CD4-positive, alpha-beta memory T cell (primary cell): ENCODE measurements at regions of chr1 and their contacts with region 1.

Region 1: DNA sequence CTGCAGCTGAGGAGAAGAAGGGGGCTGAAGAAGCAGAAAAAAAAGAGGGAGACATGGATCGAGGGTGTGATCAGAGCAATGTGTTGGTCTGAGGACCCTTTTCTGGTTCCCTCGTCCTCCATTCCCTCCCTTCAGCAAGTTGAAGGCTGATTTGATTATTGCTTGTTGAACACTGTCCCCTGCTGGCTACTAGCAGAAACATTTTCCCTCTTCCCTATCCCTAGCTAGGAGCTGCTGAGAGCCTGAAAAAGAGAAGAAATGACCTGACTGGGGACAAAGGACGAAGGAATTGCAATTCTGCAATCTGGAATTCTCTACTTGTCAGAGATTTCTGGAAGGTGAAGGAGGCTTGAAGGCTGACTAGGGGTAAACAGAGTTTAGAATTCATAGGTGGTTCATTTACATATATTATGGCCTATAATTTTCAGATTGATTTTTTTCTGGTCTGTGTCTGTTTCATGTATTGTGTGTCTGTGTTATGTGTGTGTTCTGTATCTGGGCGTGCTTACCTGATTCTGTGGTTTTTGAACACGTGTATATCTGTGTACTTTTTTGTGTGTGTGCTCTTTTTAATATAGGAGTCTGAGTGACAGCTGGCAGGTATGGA is 9.8 kb downstream of the NHLH1 start:
- DNase-seq: peak in 4 of 5 donors; percentile 39 to 46 (median 44)
- H3K4me3 ChIP-seq: no peak overlapping the region
- H3K4me3 Mint-ChIP-seq: peak overlapping the region in 3 of 8 donors; percentile 17 to 62 (median 48)
- H3K27ac ChIP-seq: no peak overlapping the region
- H3K27ac Mint-ChIP-seq: peak overlapping the region in 1 of 7 donors; percentile 31
- H3K4me1 ChIP-seq: peaks cover 14% of the 10 kb centered on the region
- H3K4me1 Mint-ChIP-seq: peaks cover 9 to 16% (median 12%) of the 10 kb centered on the region in 4 donors
- H3K27me3 ChIP-seq: no peaks in the 10 kb centered on the region
- H3K27me3 Mint-ChIP-seq: peaks cover 0 to 1% of the 10 kb centered on the region in 2 donors

Region 2: DNA sequence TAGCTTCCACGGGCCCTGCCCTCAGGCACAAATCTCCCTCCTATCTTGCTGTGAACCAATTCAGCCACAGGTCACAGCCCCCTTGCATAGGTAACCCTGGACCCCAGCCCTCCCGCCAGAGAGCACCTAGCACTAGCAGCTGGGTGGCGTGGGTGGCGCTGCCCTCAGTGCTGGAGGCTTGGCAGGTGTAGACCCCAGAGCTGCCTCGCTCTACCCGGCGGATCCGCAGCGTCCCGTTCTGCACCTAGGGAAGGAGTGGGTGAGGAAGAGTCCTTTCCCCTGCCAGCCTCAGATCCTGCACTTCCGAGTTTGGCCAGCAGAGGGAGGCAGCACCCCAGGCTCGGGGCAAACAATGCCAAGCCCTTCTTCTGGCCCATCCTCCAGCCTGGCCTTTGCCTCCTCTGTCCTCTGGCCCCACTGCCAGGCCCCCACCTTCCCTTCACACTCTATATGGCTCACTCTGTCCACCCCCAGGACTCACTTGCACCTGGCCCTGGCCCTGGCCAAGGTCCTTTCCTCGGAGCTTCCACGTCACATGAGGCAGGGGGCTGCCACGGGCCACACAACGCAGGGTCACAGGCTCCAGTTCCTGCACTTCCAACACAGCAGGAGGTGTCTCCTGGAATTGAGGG is 440.2 kb before region 1 on chr1:
- CTCF ChIA-PET with region 1: no interaction called
- POLR2A ChIA-PET with region 1: no interaction called
- intact Hi-C with region 1: loop called (anchors 5 kb)
- DNase-seq: peak; percentile 69 to 81 (median 73)
- H3K4me3 ChIP-seq: no peak overlapping the region
- H3K4me3 Mint-ChIP-seq: peak overlapping the region in 1 of 8 donors; percentile 26
- H3K27ac ChIP-seq: no peak overlapping the region
- H3K27ac Mint-ChIP-seq: peak overlapping the region in 3 of 7 donors; percentile 40 to 68 (median 45)
- H3K4me1 ChIP-seq: peaks cover 15% of the 10 kb centered on the region
- H3K4me1 Mint-ChIP-seq: peaks cover 0 to 7% (median 3%) of the 10 kb centered on the region in 4 donors
- H3K27me3 ChIP-seq: no peaks in the 10 kb centered on the region
- H3K27me3 Mint-ChIP-seq: peaks cover 6 to 10% of the 10 kb centered on the region in 2 donors

Region 3: DNA sequence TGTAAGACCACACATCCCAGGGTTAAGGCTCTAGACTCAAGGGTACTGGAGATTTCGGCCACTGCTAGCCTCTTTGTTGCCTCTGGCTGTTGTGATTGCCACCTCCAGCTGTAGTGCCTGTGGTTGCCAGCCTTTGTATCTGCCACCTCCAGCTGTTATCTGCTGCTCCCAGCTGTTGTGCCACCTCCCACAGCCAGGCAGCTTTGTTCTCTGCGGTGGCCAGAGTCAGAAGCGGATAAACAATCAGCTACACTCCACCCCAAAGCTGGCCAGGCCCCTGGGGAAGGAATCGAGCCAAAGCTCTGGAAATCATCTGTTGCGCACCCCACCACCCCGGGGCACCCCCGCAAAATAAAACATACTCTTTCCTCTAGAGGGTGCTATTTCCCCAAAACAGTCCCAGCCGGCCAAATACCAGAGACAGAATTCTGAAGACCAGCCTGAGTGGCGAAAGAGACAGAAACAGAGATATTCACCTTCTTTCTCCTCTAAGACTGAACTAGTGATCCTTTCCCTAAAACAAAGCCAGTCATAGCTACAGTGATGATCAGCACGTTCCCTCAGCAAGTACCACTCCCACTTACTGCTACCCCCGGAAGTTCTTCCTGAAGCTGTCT is 330.0 kb before region 1 on chr1:
- CTCF ChIA-PET with region 1: interaction called, 4 read pairs
- POLR2A ChIA-PET with region 1: no interaction called
- intact Hi-C with region 1: loop called (anchors 5 kb)
- DNase-seq: peak; percentile 27 to 48 (median 47)
- H3K4me3 ChIP-seq: no peak overlapping the region
- H3K4me3 Mint-ChIP-seq: peak overlapping the region; percentile 57 to 79 (median 70)
- H3K27ac ChIP-seq: no peak overlapping the region
- H3K27ac Mint-ChIP-seq: peak overlapping the region in 3 of 7 donors; percentile 31 to 62 (median 62)
- H3K4me1 ChIP-seq: peaks cover 10% of the 10 kb centered on the region
- H3K4me1 Mint-ChIP-seq: peaks cover 6 to 12% (median 9%) of the 10 kb centered on the region in 4 donors
- H3K27me3 ChIP-seq: no peaks in the 10 kb centered on the region
- H3K27me3 Mint-ChIP-seq: peaks cover 12 to 18% of the 10 kb centered on the region in 2 donors

Region 4: DNA sequence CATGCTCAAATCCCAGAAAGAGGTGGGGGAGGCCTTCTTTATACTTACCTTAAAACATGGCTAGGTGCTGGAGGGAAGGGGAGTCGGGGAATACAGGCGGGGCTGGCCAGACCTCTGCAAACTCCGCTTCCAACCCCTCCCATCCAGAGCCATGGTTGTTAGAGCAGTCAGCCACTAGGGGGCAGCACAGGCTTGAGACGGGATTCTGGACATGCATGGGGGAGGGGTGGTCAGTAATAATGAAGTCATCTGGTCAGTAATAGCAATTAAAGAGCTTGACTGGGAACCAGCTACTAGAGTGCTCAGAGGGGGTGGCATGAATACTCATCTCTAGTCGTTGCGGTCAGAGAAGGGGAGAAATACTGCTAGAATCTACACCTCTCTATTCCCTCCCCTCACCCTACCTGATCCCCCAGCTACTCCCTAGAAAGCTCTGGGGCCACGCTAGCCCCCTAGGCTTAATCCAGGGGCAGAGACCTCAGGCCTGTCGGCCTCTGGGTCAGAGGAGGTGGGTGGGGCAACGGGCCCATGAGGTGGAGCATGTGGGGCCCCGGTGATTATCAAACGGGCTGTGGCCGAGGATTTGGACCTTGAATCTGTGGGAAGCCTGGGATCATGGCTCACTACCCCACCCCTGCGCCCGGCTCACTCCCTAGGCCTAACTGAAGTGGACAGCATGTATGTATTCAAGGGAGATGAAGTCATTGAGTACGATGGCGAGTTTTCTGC is 183.4 kb before region 1 on chr1:
- CTCF ChIA-PET with region 1: interaction called, 20 read pairs
- POLR2A ChIA-PET with region 1: interaction called, 3 read pairs
- intact Hi-C with region 1: loop called (anchors 1 kb)
- DNase-seq: peak; percentile 67 to 75 (median 68)
- H3K4me3 ChIP-seq: no peak overlapping the region
- H3K4me3 Mint-ChIP-seq: no peak overlapping the region
- H3K27ac ChIP-seq: no peak overlapping the region
- H3K27ac Mint-ChIP-seq: no peak overlapping the region
- H3K4me1 ChIP-seq: peaks cover 9% of the 10 kb centered on the region
- H3K4me1 Mint-ChIP-seq: no peaks in the 10 kb centered on the region
- H3K27me3 ChIP-seq: no peaks in the 10 kb centered on the region
- H3K27me3 Mint-ChIP-seq: peaks cover 1 to 3% of the 10 kb centered on the region in 2 donors

Region 5: GRCh38 chr1:160342953-160343869 is 33.4 kb before region 1 on chr1 and contains the starts of genes COPA and NCSTN:
- CTCF ChIA-PET with region 1: interaction called, 19 read pairs
- POLR2A ChIA-PET with region 1: no interaction called
- intact Hi-C with region 1: no loop called
- DNase-seq: peak; percentile 89 to 95 (median 89)
- H3K4me3 ChIP-seq: peak within 1 kb of the TSS; percentile 77 to 96
- H3K4me3 Mint-ChIP-seq: peak within 1 kb of the TSS; percentile 99 to 100 (median 100)
- H3K27ac ChIP-seq: peak within 1 kb of the TSS; percentile 94
- H3K27ac Mint-ChIP-seq: peak within 1 kb of the TSS; percentile 96 to 100 (median 100)
- H3K4me1 ChIP-seq: peaks cover 44% of the 10 kb centered on the region
- H3K4me1 Mint-ChIP-seq: peaks cover 35 to 67% (median 49%) of the 10 kb centered on the region in 4 donors
- H3K27me3 ChIP-seq: no peaks in the 10 kb centered on the region
- H3K27me3 Mint-ChIP-seq: no peaks in the 10 kb centered on the region
- total RNA-seq, gene COPA: 128 to 132 TPM
- total RNA-seq, gene NCSTN: 62.2 to 68.0 TPM

Region 6: GRCh38 chr1:160354388-160354985 is 22.1 kb before region 1 on chr1:
- CTCF ChIA-PET with region 1: interaction called, 77 read pairs
- POLR2A ChIA-PET with region 1: no interaction called
- intact Hi-C with region 1: no loop called
- DNase-seq: peak in 2 of 5 donors; percentile 20 to 39
- H3K4me3 ChIP-seq: no peak overlapping the region
- H3K4me3 Mint-ChIP-seq: no peak overlapping the region
- H3K27ac ChIP-seq: no peak overlapping the region
- H3K27ac Mint-ChIP-seq: no peak overlapping the region
- H3K4me1 ChIP-seq: no peaks in the 10 kb centered on the region
- H3K4me1 Mint-ChIP-seq: peaks cover 0 to 3% (median under 1%) of the 10 kb centered on the region in 4 donors
- H3K27me3 ChIP-seq: no peaks in the 10 kb centered on the region
- H3K27me3 Mint-ChIP-seq: no peaks in the 10 kb centered on the region

Region 7: DNA sequence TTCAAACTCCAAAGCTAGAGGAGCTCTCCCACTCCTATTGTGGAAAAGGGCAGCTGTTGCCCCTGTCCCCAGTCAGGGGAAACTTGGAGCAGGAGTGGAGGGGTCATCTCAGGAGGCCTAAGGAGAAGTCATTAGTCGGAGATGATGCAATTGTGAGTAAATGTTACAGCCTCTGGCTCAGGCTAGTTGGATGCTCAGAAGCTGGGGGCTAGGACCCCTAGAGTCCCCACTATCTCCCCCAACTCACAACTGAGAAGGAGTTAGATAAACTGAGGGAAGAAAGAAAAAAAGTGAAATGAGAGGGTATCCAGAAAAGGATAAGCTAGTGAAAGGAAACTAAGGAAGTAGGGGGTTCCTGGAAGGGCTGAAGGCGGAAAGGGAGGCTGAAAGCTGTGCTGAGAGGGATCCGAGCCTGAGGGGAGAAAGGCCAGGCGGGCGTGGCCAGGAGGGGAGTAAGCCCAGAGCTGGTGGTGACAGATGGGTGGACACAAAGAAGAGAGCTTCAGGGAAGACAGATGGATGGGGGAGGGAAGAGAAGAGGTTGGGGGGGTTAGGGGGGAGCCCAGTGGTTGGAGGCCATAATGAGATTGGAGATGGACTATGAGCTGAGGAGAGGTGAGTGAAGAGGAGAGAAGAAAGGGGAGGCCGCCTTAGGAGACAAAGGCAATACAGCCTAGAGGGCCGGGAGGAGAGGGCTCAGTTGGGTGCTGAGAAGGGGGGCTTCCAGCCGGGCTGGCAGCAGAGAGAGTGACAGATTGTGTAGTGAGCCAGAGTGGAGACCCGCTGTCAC is 14.3 kb before region 1 on chr1:
- CTCF ChIA-PET with region 1: interaction called, 77 read pairs
- POLR2A ChIA-PET with region 1: no interaction called
- intact Hi-C with region 1: no loop called
- DNase-seq: no peak
- H3K4me3 ChIP-seq: no peak overlapping the region
- H3K4me3 Mint-ChIP-seq: no peak overlapping the region
- H3K27ac ChIP-seq: no peak overlapping the region
- H3K27ac Mint-ChIP-seq: peak overlapping the region in 6 of 7 donors; percentile 20 to 85 (median 46)
- H3K4me1 ChIP-seq: no peaks in the 10 kb centered on the region
- H3K4me1 Mint-ChIP-seq: peaks cover 0 to 5% (median 4%) of the 10 kb centered on the region in 4 donors
- H3K27me3 ChIP-seq: no peaks in the 10 kb centered on the region
- H3K27me3 Mint-ChIP-seq: no peaks in the 10 kb centered on the region